Left cardiac atrium (tissue), 4 donors: ENCODE measurements at regions of chr12 and their contacts with region 1.

Region 1: GRCh38 chr12:123580772-123581171 is 3.6 kb upstream of the TMED2 start:
- DNase-seq: no peak
- ATAC-seq: no peak

Region 2: DNA sequence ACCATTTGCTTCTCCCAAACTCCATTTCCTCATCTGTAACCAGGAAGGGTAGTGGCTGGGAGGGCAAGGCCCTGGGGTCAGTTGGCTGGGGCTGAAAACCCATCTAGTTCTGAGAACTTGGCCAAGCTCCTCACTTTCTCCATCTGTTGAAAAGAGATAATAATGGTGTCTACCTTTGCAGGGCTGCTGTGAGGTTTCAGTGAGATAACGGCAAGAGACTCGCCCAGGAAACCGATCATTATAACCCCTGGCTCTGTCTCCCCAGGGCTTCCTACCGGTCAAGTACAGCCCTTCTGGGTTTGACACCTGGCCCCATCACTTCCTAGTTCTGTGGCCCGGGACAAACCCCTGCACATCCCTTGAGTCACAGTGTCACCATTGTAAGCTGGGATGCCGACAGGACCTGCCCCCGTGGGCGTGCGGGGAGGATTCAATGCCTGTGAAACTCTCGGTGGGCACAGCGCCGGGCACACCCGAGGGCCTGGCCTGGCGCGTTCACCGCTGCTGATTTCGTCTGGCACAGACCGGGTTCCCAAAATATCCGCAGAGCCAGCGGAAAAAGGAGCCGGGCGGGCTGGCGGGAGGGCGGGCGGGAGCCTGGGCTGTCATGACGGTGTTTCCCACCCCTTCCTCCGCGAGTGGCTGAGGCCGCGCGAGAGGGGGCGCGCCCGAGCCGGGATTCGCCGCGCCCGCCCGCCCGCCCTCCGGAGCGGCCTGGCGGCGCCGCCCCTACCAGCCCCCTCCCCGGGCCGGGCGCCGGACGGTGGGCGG is 192.4 kb before region 1 on chr12:
- intact Hi-C with region 1: loop called in 1 of 2 experiments (anchors 5 kb)
- DNase-seq: peak; percentile 83
- ATAC-seq: peak; percentile 72 to 76

Region 3: GRCh38 chr12:123421314-123421713 is 159.5 kb before region 1 on chr12:
- intact Hi-C with region 1: no loop called
- DNase-seq: no peak
- ATAC-seq: no peak

Region 4: GRCh38 chr12:123457980-123458783 is 122.6 kb before region 1 on chr12 and contains the start of gene SNRNP35:
- intact Hi-C with region 1: loop called in 1 of 2 experiments (anchors 5 kb)
- DNase-seq: peak; percentile 87
- ATAC-seq: peak; percentile 88 to 89
- total RNA-seq, gene SNRNP35: 20.1 to 22.3 TPM

Region 5: DNA sequence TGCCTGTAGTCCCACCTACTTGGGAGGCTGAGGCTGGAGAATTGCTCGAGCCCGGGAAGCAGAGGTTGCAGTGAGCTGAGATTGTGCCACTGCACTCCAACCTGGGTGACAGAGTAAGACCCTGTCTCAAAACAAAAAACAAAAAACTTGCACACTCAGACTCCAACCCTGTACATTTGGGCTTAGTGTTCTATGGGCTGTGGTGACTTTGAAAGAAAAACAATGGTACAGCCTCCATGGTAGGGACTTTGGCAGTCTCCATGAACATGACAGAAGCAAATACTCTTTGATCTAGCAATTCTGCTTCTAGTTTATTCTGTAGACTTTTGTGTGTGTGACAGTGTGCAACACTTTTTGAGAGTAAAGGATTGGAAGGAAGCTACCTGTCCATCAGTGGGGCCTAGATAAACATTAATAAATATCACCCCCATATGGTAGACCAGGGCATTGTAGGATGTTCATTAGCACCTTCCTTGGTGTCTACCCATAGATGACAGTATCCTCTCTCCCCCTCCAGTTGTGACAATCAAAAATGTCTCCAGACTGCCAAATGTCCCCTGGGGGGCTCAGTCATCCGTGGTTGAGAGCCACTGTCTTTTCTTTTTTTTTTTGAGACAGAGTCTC is 112.1 kb before region 1 on chr12:
- intact Hi-C with region 1: no loop called
- DNase-seq: no peak
- ATAC-seq: no peak

Region 6: GRCh38 chr12:123533672-123534643 is 46.8 kb before region 1 on chr12 and contains the start of gene RILPL1:
- intact Hi-C with region 1: loop called in 1 of 2 experiments (anchors 5 kb)
- DNase-seq: peak; percentile 68
- ATAC-seq: peak; percentile 74 to 85
- total RNA-seq, gene RILPL1: 91.7 to 98.0 TPM